Ascending aorta (tissue), 2 donors: ENCODE measurements at regions of chr5 and their contacts with region 1.

Region 1: GRCh38 chr5:115072266-115073064 is 97.2 kb downstream of the TRIM36 start:
- DNase-seq: no peak
- H3K4me3 ChIP-seq: no peak overlapping the region
- H3K27ac ChIP-seq: no peak overlapping the region
- H3K4me1 ChIP-seq: no peaks in the 10 kb centered on the region
- H3K27me3 ChIP-seq: no peaks in the 10 kb centered on the region
- CTCF ChIP-seq: no peak

Region 2: GRCh38 chr5:113612060-113612496 is 1460.4 kb before region 1 on chr5:
- intact Hi-C with region 1: loop called (anchors 5 kb)
- DNase-seq: no peak
- H3K4me3 ChIP-seq: no peak overlapping the region
- H3K27ac ChIP-seq: no peak overlapping the region
- H3K4me1 ChIP-seq: no peaks in the 10 kb centered on the region
- H3K27me3 ChIP-seq: no peaks in the 10 kb centered on the region
- CTCF ChIP-seq: peak; percentile 30 to 65 (median 54)

Region 3: DNA sequence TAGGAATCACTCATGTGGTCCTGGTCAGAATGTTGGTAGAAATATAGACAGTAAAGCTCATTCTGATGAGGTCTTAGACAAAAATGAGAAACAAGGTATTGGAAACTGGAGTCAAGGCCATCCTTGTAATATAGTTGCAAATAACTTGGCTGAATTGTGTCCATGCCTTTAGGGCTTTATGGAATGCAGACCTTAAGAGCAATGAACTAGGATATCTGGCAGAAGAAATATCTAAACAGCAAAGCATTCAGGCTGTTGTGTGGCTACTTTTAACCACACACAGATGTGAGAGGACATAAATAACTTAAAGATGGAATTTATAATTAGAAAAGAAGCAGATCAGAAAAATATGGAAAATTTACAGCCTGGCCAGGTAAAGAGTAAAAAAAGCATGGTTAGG is 1430.8 kb before region 1 on chr5:
- intact Hi-C with region 1: no loop called
- DNase-seq: no peak
- H3K4me3 ChIP-seq: no peak overlapping the region
- H3K27ac ChIP-seq: no peak overlapping the region
- H3K4me1 ChIP-seq: no peaks in the 10 kb centered on the region
- H3K27me3 ChIP-seq: no peaks in the 10 kb centered on the region
- CTCF ChIP-seq: no peak

Region 4: DNA sequence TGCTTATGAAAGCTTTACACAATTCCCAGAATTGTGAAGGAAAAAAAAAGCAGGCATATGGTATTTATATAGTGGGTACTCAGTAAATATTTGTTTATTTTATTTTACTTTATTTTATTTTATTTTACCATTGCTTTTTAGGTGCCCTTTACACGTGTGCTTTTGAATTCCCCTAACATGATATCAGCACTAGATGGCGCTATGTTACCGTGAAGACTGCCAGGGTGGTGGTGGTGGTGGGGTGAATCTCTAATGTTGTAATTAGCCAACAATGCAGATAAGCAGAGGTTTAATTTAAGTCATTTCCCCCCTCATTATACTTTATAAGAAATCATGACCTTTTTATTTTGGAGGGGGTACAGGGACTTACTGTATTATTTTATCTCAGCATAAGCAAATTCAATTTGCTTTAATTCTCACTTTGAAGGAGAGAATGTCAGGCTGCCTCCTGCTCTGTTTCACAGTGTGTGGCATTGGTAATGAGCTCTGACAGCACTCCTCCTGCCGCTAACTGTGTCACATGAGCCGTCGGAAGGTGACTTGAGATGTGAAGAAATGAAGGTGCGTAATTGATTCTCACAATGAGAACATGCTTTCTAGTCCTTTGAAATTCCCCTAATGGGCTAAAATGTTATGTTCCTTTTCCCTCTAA is 1393.4 kb before region 1 on chr5:
- intact Hi-C with region 1: loop called (anchors 10 kb)
- DNase-seq: no peak
- H3K4me3 ChIP-seq: no peak overlapping the region
- H3K27ac ChIP-seq: no peak overlapping the region
- H3K4me1 ChIP-seq: no peaks in the 10 kb centered on the region
- H3K27me3 ChIP-seq: no peaks in the 10 kb centered on the region
- CTCF ChIP-seq: peak; percentile 10 to 57 (median 47)